B cell (primary cell): ENCODE measurements at regions of chr1 and their contacts with region 1.

Region 1: DNA sequence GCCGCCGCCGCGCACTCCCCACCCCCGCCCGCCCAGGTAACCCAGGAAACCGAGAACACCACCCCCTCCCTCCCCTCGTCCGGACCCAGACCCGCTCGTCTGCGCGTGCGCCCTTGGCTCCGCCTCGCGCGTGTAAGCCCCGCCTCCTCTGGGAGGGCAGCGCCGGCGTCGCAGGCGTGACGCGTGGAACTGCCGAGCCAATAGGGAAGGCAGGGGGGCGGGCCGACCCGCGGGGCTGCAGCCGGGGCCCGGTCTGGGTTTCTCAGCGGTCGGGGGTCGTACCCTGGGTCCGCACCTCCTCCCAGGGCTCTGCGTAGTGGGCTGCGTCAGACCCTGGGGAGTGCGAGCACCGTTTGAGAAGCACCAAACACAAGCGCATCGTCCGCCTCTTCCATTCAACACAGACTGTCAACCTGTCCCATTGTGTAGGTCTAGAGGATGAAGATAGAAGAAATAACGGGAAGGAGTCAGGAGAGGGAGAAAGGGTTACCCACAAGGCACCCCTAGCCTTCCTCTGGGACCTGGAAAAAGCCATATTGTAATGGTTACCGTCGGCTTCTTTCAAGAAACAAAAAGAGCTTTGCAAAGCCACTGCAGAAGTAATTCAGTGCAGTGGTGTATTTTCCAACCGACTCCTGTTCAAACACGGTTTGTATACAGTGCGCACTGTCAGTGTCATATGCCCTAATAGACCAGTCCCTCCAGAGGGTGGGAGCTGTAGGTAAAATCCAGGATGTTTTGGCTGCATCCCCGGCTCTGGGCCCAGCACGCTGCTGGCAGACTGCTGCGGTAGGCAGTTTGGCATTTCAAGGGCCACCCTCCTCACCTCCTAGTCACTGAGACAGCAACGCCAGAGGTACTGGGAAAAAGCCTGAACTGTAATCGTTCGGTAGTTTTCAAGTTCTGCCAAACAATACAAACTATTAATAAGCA is 473 bp upstream of the LYST start:
- DNase-seq: peak; percentile 98
- ATAC-seq: peak; percentile 74
- H3K4me3 ChIP-seq: peak overlapping the region; percentile 62 to 97 (median 93)
- H3K4me3 Mint-ChIP-seq: peak overlapping the region; percentile 91
- H3K27ac ChIP-seq: peak overlapping the region; percentile 94 to 99
- H3K27ac Mint-ChIP-seq: peak overlapping the region; percentile 94
- H3K4me1 ChIP-seq: peaks cover 38 to 42% of the 10 kb centered on the region in 2 donors
- H3K4me1 Mint-ChIP-seq: peaks cover 50% of the 10 kb centered on the region
- H3K27me3 ChIP-seq: no peaks in the 10 kb centered on the region
- H3K27me3 Mint-ChIP-seq: no peaks in the 10 kb centered on the region
- CTCF ChIP-seq: no peak

Region 2: DNA sequence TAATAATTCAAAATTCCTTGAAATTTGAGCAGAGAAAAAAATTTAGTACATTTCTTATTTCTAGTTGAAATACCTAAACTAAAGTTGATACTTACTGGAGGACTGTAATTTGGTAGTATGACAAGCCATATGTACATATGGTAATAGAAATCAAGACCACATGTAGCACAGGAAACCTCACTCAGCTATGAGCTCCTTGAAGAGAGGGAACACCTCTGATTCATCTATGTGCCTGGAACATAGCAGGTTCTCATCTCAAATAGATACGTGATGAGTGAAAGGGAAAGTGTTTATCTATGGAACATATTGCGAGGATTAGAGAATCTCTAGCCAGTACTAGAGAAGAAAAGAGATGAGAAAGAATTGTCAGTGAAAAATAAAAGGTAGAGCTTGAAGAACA is 169.7 kb before region 1 on chr1:
- CTCF ChIA-PET with region 1: no interaction called
- POLR2A ChIA-PET with region 1: no interaction called
- intact Hi-C with region 1: no loop called
- DNase-seq: no peak
- ATAC-seq: no peak
- H3K4me3 ChIP-seq: no peak overlapping the region
- H3K4me3 Mint-ChIP-seq: no peak overlapping the region
- H3K27ac ChIP-seq: no peak overlapping the region
- H3K27ac Mint-ChIP-seq: no peak overlapping the region
- H3K4me1 ChIP-seq: no peaks in the 10 kb centered on the region
- H3K4me1 Mint-ChIP-seq: no peaks in the 10 kb centered on the region
- H3K27me3 ChIP-seq: no peaks in the 10 kb centered on the region
- H3K27me3 Mint-ChIP-seq: no peaks in the 10 kb centered on the region
- CTCF ChIP-seq: no peak

Region 3: DNA sequence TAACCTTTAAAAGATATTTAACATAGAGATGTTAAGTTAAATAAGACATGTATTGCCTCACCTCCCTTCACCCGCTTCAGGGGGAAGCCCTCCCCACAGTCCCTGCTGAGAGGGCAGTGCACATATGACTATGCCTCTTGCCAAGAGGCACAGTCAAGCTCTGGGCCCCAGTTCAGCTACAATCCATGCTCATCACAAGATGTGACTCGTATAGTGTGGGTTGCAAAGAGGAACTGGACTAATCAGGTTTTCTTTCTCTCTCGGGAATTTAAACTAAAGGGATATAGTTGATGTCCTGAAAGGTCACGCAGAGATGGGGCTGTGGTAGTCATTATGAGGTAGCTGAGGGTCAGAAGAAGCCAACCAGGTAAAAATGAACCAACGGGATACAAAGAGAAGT is 36.0 kb before region 1 on chr1:
- CTCF ChIA-PET with region 1: interaction called, 3 read pairs
- POLR2A ChIA-PET with region 1: no interaction called
- intact Hi-C with region 1: loop called (anchors 5 kb)
- DNase-seq: no peak
- ATAC-seq: peak; percentile 73
- H3K4me3 ChIP-seq: no peak overlapping the region
- H3K4me3 Mint-ChIP-seq: no peak overlapping the region
- H3K27ac ChIP-seq: peak overlapping the region in 1 of 2 donors; percentile 52
- H3K27ac Mint-ChIP-seq: peak overlapping the region; percentile 44
- H3K4me1 ChIP-seq: peaks cover 0 to 4% of the 10 kb centered on the region in 2 donors
- H3K4me1 Mint-ChIP-seq: peaks cover 19% of the 10 kb centered on the region
- H3K27me3 ChIP-seq: no peaks in the 10 kb centered on the region
- H3K27me3 Mint-ChIP-seq: no peaks in the 10 kb centered on the region
- CTCF ChIP-seq: no peak

Region 4: GRCh38 chr1:235933017-235933765 is 66.0 kb after region 1 on chr1:
- CTCF ChIA-PET with region 1: interaction called, 8 read pairs
- POLR2A ChIA-PET with region 1: interaction called, 4 read pairs
- intact Hi-C with region 1: loop called (anchors 1 kb)
- DNase-seq: peak; percentile 33
- ATAC-seq: no peak
- H3K4me3 ChIP-seq: no peak overlapping the region
- H3K4me3 Mint-ChIP-seq: peak overlapping the region; percentile 1
- H3K27ac ChIP-seq: peak overlapping the region; percentile 26 to 75
- H3K27ac Mint-ChIP-seq: peak overlapping the region; percentile 85
- H3K4me1 ChIP-seq: peaks cover 93 to 95% of the 10 kb centered on the region in 2 donors
- H3K4me1 Mint-ChIP-seq: peaks cover 80% of the 10 kb centered on the region
- H3K27me3 ChIP-seq: no peaks in the 10 kb centered on the region
- H3K27me3 Mint-ChIP-seq: no peaks in the 10 kb centered on the region
- CTCF ChIP-seq: no peak

Region 5: DNA sequence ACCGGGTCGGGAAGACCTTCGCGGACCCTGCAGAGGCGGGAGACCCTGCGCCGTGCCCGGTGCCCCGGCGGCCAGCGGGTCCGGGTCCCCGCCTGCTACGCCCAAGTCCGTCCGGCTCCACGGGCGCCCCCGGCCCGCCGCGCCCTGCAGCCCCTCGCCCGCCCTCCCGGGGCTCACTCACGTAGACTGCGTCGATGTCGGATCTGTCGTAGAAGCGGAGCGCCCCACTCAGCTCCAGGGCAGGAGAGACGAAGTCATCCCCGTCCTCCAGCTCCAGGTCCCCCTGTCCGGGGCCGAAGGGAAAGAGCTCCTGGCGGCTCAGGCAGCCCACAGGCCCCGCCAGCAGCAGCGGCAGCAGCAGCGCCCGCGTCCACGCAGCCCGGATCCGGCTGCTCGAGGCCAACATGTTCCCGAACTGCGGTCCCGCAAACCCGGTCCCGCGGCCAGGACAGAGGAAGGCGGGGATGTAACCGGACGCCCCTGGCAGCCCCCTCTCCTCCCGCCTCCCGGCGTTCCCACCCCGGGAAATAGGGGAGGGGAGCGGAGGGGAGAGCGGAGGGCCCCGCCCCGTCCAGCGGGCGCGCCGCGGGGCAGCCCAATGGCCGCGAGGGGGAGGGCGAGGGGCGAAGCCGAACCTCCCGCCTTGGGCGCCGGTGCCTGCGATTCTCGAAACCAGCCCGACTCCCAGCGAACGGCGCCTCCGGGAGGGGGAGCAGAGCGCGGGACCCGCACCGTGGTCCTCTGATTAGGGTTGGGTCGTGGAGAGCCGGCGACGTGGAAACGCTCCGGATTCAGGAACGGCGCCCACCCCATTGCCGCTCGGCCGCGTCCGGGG is 197.7 kb after region 1 on chr1 and contains the start of gene NID1:
- CTCF ChIA-PET with region 1: no interaction called
- POLR2A ChIA-PET with region 1: no interaction called
- intact Hi-C with region 1: loop called (anchors 5 kb)
- DNase-seq: peak; percentile 66
- ATAC-seq: no peak
- H3K4me3 ChIP-seq: peak within 1 kb of the TSS in 4 of 5 experiments; percentile 40 to 68 (median 58)
- H3K4me3 Mint-ChIP-seq: peak within 1 kb of the TSS; percentile 75
- H3K27ac ChIP-seq: no peak within 1 kb of the TSS
- H3K27ac Mint-ChIP-seq: peak within 1 kb of the TSS; percentile 10
- H3K4me1 ChIP-seq: peaks cover 38% of the 10 kb centered on the region in 2 donors
- H3K4me1 Mint-ChIP-seq: peaks cover 30% of the 10 kb centered on the region
- H3K27me3 ChIP-seq: peaks cover 0 to 37% (median 15%) of the 10 kb centered on the region in 4 experiments
- H3K27me3 Mint-ChIP-seq: peaks cover 27% of the 10 kb centered on the region
- CTCF ChIP-seq: peak; percentile 21
- total RNA-seq, gene NID1: not detected in 2 replicates

Region 6: GRCh38 chr1:236523701-236524141 is 656.5 kb after region 1 on chr1 and contains the start of gene LGALS8:
- CTCF ChIA-PET with region 1: no interaction called
- POLR2A ChIA-PET with region 1: no interaction called
- intact Hi-C with region 1: loop called (anchors 2 kb)
- DNase-seq: peak; percentile 87
- ATAC-seq: peak; percentile 64
- H3K4me3 ChIP-seq: peak within 1 kb of the TSS; percentile 70 to 99 (median 96)
- H3K4me3 Mint-ChIP-seq: peak within 1 kb of the TSS; percentile 99
- H3K27ac ChIP-seq: peak within 1 kb of the TSS; percentile 78
- H3K27ac Mint-ChIP-seq: peak within 1 kb of the TSS; percentile 97
- H3K4me1 ChIP-seq: peaks cover 8 to 9% of the 10 kb centered on the region in 2 donors
- H3K4me1 Mint-ChIP-seq: peaks cover 16% of the 10 kb centered on the region
- H3K27me3 ChIP-seq: no peaks in the 10 kb centered on the region
- H3K27me3 Mint-ChIP-seq: no peaks in the 10 kb centered on the region
- CTCF ChIP-seq: no peak
- total RNA-seq, gene LGALS8: 64.9 and 67.0 TPM in 2 replicates